AG04450 (cell line): ENCODE measurements at regions of chr4 and their contacts with region 1.

Region 1: GRCh38 chr4:108030332-108030731 is 40.6 kb downstream of the HADH start:
- DNase-seq: peak; percentile 24
- H3K4me3 ChIP-seq: no peak overlapping the region
- H3K27ac ChIP-seq: no peak overlapping the region
- H3K27me3 ChIP-seq: no peaks in the 10 kb centered on the region
- CTCF ChIP-seq: peak; percentile 64

Region 2: GRCh38 chr4:108045694-108046038 is 15.3 kb after region 1 on chr4:
- CTCF ChIA-PET with region 1: no interaction called
- POLR2A ChIA-PET with region 1: no interaction called
- DNase-seq: no peak
- H3K4me3 ChIP-seq: no peak overlapping the region
- H3K27ac ChIP-seq: no peak overlapping the region
- H3K27me3 ChIP-seq: no peaks in the 10 kb centered on the region
- CTCF ChIP-seq: no peak

Region 3: DNA sequence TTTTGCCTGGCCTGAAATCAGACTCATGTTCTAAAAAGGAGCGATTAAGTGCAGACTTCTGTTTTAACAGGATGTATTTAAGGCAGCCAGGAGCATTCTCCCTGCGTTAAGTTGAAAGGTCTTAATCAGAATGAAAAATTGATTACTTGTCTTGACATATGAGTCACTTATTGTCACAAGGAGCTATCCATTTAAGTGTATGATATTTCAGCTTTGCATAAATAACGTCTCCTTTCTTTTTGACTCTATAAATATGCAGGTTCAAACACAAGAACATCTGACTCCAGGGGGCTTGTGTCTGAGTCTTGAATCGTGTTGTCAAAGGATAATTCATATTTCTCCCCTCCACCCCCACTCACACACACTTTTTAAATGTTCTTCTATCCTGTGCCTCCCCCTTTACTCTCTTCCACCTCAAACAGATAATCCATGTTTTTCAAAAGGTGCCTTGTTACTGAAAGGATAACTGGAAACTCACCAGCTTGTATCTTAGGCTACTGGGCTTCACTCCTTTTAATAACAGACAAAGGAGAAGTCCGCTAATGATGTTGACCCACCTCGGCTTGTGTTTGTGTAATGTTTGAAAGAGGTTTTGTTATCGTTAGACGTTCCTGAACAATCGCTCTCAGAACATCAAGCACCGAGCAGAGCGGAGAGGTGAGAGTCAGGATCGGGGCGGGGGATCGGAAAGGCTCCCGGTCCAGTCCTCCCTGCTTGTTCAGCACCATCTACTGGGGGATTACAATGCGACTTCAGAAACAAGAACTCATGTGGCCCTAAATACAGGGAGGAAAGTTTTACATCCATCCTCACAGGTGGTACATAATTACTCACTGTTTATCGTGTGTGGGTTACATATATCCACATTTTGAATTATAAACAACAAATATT is 482.5 kb after region 1 on chr4:
- CTCF ChIA-PET with region 1: interaction called, 10 read pairs
- POLR2A ChIA-PET with region 1: no interaction called
- DNase-seq: peak; percentile 20
- H3K4me3 ChIP-seq: no peak overlapping the region
- H3K27ac ChIP-seq: no peak overlapping the region
- H3K27me3 ChIP-seq: peaks cover 9% of the 10 kb centered on the region
- CTCF ChIP-seq: peak; percentile 65